ENCODE measurements at regions of chr6 and their contacts with region 1.

Region 1: GRCh38 chr6:32244946-32245398 is 21.1 kb upstream of the NOTCH4 start:
- DNase-seq: peak; percentile 44 to 85
- ATAC-seq: peak; percentile 82 to 94; a peak in 5 of 6 replicates
- H3K4me3 ChIP-seq: no peak overlapping the region
- H3K27ac ChIP-seq: peak overlapping the region in 1 of 2 experiments; percentile 49; a peak in 1 of 6 replicates
- H3K4me1 ChIP-seq: no peaks in the 10 kb centered on the region
- CTCF ChIP-seq: peak; percentile 79
- EP300 ChIP-seq: no peak
- POLR2A ChIP-seq: no peak
- RAD21 ChIP-seq: peak; percentile 80 to 85

Region 2: GRCh38 chr6:32060966-32061655 is 183.9 kb before region 1 on chr6:
- CTCF ChIA-PET with region 1: no interaction called
- POLR2A ChIA-PET with region 1: no interaction called
- DNase-seq: no peak
- ATAC-seq: no peak
- H3K4me3 ChIP-seq: no peak overlapping the region
- H3K27ac ChIP-seq: no peak overlapping the region
- H3K4me1 ChIP-seq: no peaks in the 10 kb centered on the region
- CTCF ChIP-seq: no peak
- EP300 ChIP-seq: no peak
- POLR2A ChIP-seq: no peak
- RAD21 ChIP-seq: 0 out of 5 replicates have a peak, but pooled peaks of 1 of the 2 experiments have one; percentile 10

Region 3: GRCh38 chr6:32255199-32256153 is 10.5 kb after region 1 on chr6:
- CTCF ChIA-PET with region 1: interaction called, 46 read pairs
- POLR2A ChIA-PET with region 1: interaction called, 3 read pairs
- DNase-seq: peak; percentile 72 to 82
- ATAC-seq: peak; percentile 99
- H3K4me3 ChIP-seq: peak overlapping the region; percentile 11
- H3K27ac ChIP-seq: peak overlapping the region; percentile 60 to 84
- H3K4me1 ChIP-seq: peaks cover 7% of the 10 kb centered on the region; the same call in 1 of the 3 replicates
- CTCF ChIP-seq: peak; percentile 66
- EP300 ChIP-seq: no peak
- POLR2A ChIP-seq: no peak
- RAD21 ChIP-seq: peak; percentile 27 to 46